CD4-positive, alpha-beta T cell (primary cell): ENCODE measurements at regions of chr10 and their contacts with region 1.

Region 1: DNA sequence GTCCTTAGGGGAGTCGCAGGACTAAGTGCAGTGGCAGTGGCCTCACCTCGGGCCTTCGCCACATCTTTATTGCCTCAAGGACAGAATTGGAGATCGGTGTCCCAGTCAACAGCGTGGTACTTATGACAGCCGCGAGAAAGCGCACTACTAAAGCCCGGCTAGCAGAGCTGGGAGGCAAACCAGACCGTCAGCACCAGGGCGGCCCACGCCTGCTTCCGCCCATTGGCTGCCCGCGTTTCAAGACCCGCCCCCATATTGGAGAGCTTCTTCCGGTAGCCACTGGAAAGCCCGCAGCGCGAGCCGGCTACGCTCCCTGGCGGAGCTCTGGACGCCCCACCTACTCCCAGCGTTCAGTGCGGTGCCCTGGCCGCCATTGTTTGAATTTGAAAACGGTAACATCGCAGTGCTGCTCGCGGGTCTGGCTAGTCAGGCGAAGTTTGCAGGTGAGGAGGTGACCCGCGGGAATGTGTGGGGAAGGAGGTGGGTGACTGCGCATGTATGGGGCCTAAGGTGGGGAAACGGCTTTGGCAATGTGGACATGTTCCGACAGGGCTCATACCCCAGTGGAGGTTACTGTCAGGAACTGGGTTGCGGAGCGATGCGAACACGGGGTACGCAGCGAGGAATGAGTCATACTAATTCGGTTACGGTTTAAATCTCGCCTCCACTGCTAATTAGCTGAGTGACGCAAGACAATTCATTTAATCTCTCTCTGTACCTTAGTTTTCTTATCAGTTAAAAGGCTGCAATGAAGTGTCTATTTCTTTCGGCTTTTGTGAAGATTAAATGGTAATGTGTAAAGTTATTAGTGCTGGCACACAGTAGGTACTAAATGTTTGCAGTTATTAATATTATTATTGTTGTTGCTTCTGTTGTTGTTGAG is at the start of gene KIF20B:
- DNase-seq: peak; percentile 90 to 98 (median 93)
- ATAC-seq: peak; percentile 95
- H3K4me3 ChIP-seq: peak within 1 kb of the TSS; percentile 87
- H3K4me3 Mint-ChIP-seq: peak within 1 kb of the TSS; percentile 97
- H3K27ac ChIP-seq: peak within 1 kb of the TSS; percentile 73 to 78
- H3K27ac Mint-ChIP-seq: peak within 1 kb of the TSS; percentile 99
- H3K4me1 ChIP-seq: peaks cover 9% of the 10 kb centered on the region
- H3K4me1 Mint-ChIP-seq: peaks cover 44% of the 10 kb centered on the region
- H3K27me3 ChIP-seq: no peaks in the 10 kb centered on the region
- H3K27me3 Mint-ChIP-seq: no peaks in the 10 kb centered on the region
- CTCF ChIP-seq: peak; percentile 24
- total RNA-seq, gene KIF20B: 17.1 to 18.4 TPM

Region 2: GRCh38 chr10:87817609-87818504 is 1883.6 kb before region 1 on chr10 and contains the start of gene ATAD1:
- CTCF ChIA-PET with region 1: no interaction called
- POLR2A ChIA-PET with region 1: no interaction called
- intact Hi-C with region 1: loop called in 1 of 2 experiments (anchors 10 kb)
- DNase-seq: peak; percentile 78 to 95 (median 86)
- ATAC-seq: peak; percentile 79
- H3K4me3 ChIP-seq: peak within 1 kb of the TSS; percentile 93
- H3K4me3 Mint-ChIP-seq: peak within 1 kb of the TSS; percentile 92
- H3K27ac ChIP-seq: peak within 1 kb of the TSS; percentile 93 to 98
- H3K27ac Mint-ChIP-seq: peak within 1 kb of the TSS; percentile 99
- H3K4me1 ChIP-seq: peaks cover 19% of the 10 kb centered on the region
- H3K4me1 Mint-ChIP-seq: peaks cover 47% of the 10 kb centered on the region
- H3K27me3 ChIP-seq: no peaks in the 10 kb centered on the region
- H3K27me3 Mint-ChIP-seq: no peaks in the 10 kb centered on the region
- CTCF ChIP-seq: peak; percentile 5
- total RNA-seq, gene ATAD1: 33.7 to 38.7 TPM

Region 3: GRCh38 chr10:89251409-89252224 is 449.9 kb before region 1 on chr10 and contains the start of gene LIPA:
- CTCF ChIA-PET with region 1: interaction called, 3 read pairs
- POLR2A ChIA-PET with region 1: interaction called, 18 read pairs
- intact Hi-C with region 1: loop called (anchors 5 to 10 kb)
- DNase-seq: peak; percentile 89 to 99 (median 94)
- ATAC-seq: peak; percentile 97
- H3K4me3 ChIP-seq: peak within 1 kb of the TSS; percentile 72
- H3K4me3 Mint-ChIP-seq: peak within 1 kb of the TSS; percentile 92
- H3K27ac ChIP-seq: peak within 1 kb of the TSS; percentile 14 to 41
- H3K27ac Mint-ChIP-seq: peak within 1 kb of the TSS; percentile 89
- H3K4me1 ChIP-seq: peaks cover 10% of the 10 kb centered on the region
- H3K4me1 Mint-ChIP-seq: peaks cover 30% of the 10 kb centered on the region
- H3K27me3 ChIP-seq: no peaks in the 10 kb centered on the region
- H3K27me3 Mint-ChIP-seq: no peaks in the 10 kb centered on the region
- CTCF ChIP-seq: no peak
- total RNA-seq, gene LIPA: 15.6 to 16.4 TPM

Region 4: DNA sequence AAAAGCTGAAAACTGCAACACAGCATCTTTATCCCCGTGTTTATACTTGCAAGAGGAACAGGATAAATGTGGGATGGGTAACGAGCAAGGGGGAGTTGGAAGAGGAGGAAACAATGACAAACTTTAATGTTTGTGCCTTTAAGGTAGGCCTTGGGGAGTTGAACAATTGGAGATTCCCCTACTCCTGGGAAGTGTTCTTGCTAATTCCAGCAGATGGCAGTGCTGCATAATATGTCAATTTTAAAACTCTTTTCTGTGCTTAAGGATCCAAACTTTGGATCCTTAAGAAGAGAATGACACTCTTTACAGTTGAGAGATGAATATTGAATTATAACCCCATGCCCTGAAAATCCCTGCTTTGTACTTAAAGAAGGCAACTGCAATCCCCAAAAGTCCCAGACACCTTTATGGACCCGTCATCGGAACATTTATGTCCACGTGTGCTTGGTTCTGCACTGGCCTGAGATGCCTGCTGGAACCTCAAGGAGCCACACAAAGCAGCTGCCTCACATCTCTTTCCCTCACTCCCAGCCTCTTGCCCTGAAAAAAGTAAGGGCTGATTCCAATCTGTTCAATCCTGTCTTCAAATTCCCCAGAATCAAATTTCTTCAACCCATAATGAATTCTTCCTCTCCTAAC is 275.1 kb before region 1 on chr10:
- CTCF ChIA-PET with region 1: no interaction called
- POLR2A ChIA-PET with region 1: interaction called, 3 read pairs
- intact Hi-C with region 1: loop called (anchors 5 kb)
- DNase-seq: peak in 4 of 14 experiments; percentile 15 to 62 (median 52)
- ATAC-seq: peak; percentile 71
- H3K4me3 ChIP-seq: no peak overlapping the region
- H3K4me3 Mint-ChIP-seq: no peak overlapping the region
- H3K27ac ChIP-seq: no peak overlapping the region
- H3K27ac Mint-ChIP-seq: no peak overlapping the region
- H3K4me1 ChIP-seq: no peaks in the 10 kb centered on the region
- H3K4me1 Mint-ChIP-seq: peaks cover 6% of the 10 kb centered on the region
- H3K27me3 ChIP-seq: peaks cover 0 to 6% of the 10 kb centered on the region in 2 experiments
- H3K27me3 Mint-ChIP-seq: no peaks in the 10 kb centered on the region
- CTCF ChIP-seq: peak; percentile 72

Region 5: DNA sequence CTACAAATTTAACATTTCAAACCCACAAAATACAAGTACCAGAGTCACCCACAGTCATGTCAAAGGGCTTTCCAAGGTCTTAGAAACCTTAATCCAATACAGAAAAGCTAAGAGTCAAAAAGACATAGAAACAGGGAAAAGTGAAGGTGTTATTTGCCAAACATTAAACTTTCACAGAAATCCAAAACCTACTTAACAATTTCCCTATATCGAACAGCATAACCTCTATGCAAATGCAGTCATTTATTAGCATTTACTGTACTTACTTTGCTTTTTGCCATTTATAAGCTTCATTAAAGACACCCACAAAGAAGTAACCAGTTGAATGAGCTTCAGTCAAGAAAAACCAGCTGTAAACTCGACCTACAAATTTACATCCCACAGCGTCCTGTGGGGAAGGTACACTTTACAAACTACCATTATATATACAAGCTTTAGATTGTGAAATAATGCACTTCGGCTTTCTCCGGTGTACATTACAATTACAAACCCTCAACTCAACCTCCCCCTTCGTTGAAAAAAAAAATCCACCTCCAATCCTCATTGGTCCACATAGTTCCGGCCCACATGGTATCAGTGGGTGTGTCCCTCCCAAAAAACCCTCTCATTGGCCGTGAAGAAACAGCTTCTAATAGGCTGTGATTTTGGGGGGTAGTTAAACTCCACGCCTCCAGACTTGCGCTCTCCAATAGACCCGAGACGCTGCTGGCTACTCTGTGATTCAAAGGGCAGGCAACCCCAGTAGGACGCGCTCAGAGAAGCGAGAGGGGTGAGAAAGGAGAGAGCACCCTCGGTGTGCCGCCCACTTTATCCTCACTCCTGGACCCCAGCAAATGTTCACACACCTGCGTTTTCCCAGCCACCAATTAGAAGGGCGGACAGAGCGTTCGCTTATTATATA is 57.8 kb before region 1 on chr10:
- CTCF ChIA-PET with region 1: interaction called, 7 read pairs
- POLR2A ChIA-PET with region 1: interaction called, 29 read pairs
- intact Hi-C with region 1: loop called (anchors 1 to 2 kb)
- DNase-seq: peak; percentile 7 to 87 (median 48)
- ATAC-seq: peak; percentile 84
- H3K4me3 ChIP-seq: peak overlapping the region; percentile 77
- H3K4me3 Mint-ChIP-seq: no peak overlapping the region
- H3K27ac ChIP-seq: no peak overlapping the region
- H3K27ac Mint-ChIP-seq: no peak overlapping the region
- H3K4me1 ChIP-seq: peaks cover 16% of the 10 kb centered on the region
- H3K4me1 Mint-ChIP-seq: peaks cover 8% of the 10 kb centered on the region
- H3K27me3 ChIP-seq: no peaks in the 10 kb centered on the region
- H3K27me3 Mint-ChIP-seq: no peaks in the 10 kb centered on the region
- CTCF ChIP-seq: no peak

Region 6: GRCh38 chr10:91220194-91220953 is 1518.9 kb after region 1 on chr10 and contains the start of gene PCGF5:
- CTCF ChIA-PET with region 1: no interaction called
- POLR2A ChIA-PET with region 1: no interaction called
- intact Hi-C with region 1: loop called in 1 of 2 experiments (anchors 10 kb)
- DNase-seq: peak; percentile 81 to 96 (median 91)
- ATAC-seq: peak; percentile 94
- H3K4me3 ChIP-seq: peak within 1 kb of the TSS; percentile 59
- H3K4me3 Mint-ChIP-seq: peak within 1 kb of the TSS; percentile 89
- H3K27ac ChIP-seq: peak within 1 kb of the TSS in 1 of 2 donors; percentile 65
- H3K27ac Mint-ChIP-seq: peak within 1 kb of the TSS; percentile 84
- H3K4me1 ChIP-seq: peaks cover 21% of the 10 kb centered on the region
- H3K4me1 Mint-ChIP-seq: peaks cover 44% of the 10 kb centered on the region
- H3K27me3 ChIP-seq: no peaks in the 10 kb centered on the region
- H3K27me3 Mint-ChIP-seq: no peaks in the 10 kb centered on the region
- CTCF ChIP-seq: no peak
- total RNA-seq, gene PCGF5: 57.7 to 58.4 TPM